ENCODE measurements at regions of chr7 and their contacts with region 1.

Region 1: DNA sequence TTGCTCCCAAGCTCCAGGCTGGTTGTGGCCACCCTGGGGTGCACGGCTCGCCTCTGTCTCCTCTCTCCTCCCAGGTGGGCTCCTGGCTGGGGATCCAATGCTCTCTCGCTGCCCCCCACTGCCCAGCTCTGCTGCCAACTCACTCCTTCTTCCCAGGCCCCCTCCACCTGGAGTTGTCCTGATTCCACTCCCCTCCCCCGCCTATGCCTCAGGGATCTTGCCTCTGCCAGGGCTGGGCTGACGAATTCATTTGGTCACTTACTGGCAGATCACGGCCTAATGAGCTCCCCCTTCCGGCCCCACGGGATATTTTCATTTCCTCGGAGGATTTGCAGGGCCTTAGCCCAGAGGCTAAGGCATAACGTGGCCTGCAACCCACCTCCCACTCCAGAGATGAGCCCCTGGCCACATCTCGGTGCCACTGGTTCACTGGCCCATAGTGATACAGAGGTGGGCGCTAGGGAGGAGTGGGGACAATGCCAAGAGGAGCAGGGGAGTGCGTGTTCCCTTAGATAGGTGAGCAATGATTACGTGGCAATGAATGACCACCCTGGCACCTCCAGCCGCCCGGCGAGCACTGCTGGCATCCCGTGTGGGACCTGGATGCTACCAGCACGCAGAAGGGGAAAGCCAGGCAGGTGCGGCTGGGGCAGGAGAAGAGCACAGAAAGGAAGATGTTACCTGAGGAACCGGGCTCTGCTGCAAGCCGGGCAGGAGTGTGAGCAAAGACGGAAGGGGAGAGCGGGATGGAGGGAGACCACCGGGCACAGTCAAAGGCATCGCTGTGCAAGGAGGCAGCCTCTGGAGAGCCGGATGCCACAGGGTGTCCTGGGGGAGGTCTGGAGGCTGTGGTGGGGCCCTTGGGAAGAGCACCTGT is 344.7 kb upstream of the SHH start:
- DNase-seq: peak in 2 of 3 donors; percentile 50 to 68
- ATAC-seq: peak; percentile 84 to 98 (median 90)
- H3K4me3 ChIP-seq: no peak overlapping the region
- H3K27ac ChIP-seq: no peak overlapping the region
- H3K4me1 ChIP-seq: no peaks in the 10 kb centered on the region
- H3K27me3 ChIP-seq: no peaks in the 10 kb centered on the region
- CTCF ChIP-seq: peak; percentile 37 to 56 (median 42)
- POLR2A ChIP-seq: no peak

Region 2: GRCh38 chr7:155815332-155816191 is 341.4 kb before region 1 on chr7:
- intact Hi-C with region 1: loop called (anchors 10 kb)
- DNase-seq: peak; percentile 80 to 83 (median 83)
- ATAC-seq: peak; percentile 87 to 88 (median 87)
- H3K4me3 ChIP-seq: no peak overlapping the region
- H3K27ac ChIP-seq: no peak overlapping the region
- H3K4me1 ChIP-seq: peaks cover 0 to 27% (median 4%) of the 10 kb centered on the region in 4 donors
- H3K27me3 ChIP-seq: no peaks in the 10 kb centered on the region
- CTCF ChIP-seq: peak; percentile 55 to 78 (median 70)
- POLR2A ChIP-seq: no peak

Region 3: GRCh38 chr7:155824227-155824886 is 332.6 kb before region 1 on chr7:
- intact Hi-C with region 1: loop called (anchors 10 kb)
- DNase-seq: no peak
- ATAC-seq: no peak
- H3K4me3 ChIP-seq: no peak overlapping the region
- H3K27ac ChIP-seq: no peak overlapping the region
- H3K4me1 ChIP-seq: no peaks in the 10 kb centered on the region
- H3K27me3 ChIP-seq: no peaks in the 10 kb centered on the region
- CTCF ChIP-seq: no peak
- POLR2A ChIP-seq: no peak